ENCODE measurements at regions of chr2 and their contacts with region 1.

Region 1: DNA sequence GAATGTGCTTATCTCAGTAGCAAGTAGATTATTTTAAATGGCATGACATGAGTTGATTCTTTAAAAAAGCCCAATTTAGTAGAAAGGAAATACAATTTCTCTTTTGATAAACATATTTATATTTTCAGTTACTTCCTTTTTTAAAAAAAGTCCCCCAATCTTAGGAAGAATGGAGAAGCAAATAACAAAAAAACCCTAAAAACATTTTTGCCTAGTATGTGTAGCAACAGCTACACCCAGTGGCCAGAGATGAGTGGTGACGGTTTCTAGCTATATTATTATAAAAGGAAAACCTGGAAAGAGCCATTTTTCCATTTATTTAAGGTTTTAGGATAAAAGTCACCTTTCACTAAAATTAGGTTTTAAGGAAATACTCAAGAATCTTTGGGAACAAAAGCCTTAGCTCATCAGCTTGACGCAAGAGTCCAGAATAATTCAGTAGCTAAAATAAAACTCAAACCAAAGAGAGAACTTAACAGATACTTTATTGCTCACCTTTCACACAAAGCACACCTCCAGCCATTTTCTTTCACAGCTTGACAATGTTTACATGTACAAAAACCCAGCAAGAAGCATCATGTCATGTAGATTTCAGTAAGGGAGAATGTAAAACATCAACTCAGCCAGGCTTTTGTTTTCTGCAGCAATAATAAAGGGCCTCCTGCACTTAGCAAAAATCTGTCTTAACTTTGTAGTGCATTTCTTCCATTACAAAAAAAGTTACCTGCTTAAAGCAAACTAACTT is 15.7 kb downstream of the FAM98A start:
- DNase-seq: peak in 3 of 5 donors; percentile 31 to 51 (median 32)
- H3K4me3 ChIP-seq: no peak overlapping the region
- H3K4me3 Mint-ChIP-seq: no peak overlapping the region
- H3K27ac ChIP-seq: no peak overlapping the region
- H3K27ac Mint-ChIP-seq: no peak overlapping the region
- H3K4me1 ChIP-seq: peaks cover 11% of the 10 kb centered on the region
- H3K4me1 Mint-ChIP-seq: peaks cover 2 to 8% (median 5%) of the 10 kb centered on the region in 3 donors
- H3K27me3 ChIP-seq: no peaks in the 10 kb centered on the region
- H3K27me3 Mint-ChIP-seq: no peaks in the 10 kb centered on the region

Region 2: GRCh38 chr2:33086400-33087015 is 496.9 kb before region 1 on chr2:
- CTCF ChIA-PET with region 1: no interaction called
- POLR2A ChIA-PET with region 1: no interaction called
- DNase-seq: no peak
- H3K4me3 ChIP-seq: no peak overlapping the region
- H3K4me3 Mint-ChIP-seq: no peak overlapping the region
- H3K27ac ChIP-seq: no peak overlapping the region
- H3K27ac Mint-ChIP-seq: no peak overlapping the region
- H3K4me1 ChIP-seq: no peaks in the 10 kb centered on the region
- H3K4me1 Mint-ChIP-seq: no peaks in the 10 kb centered on the region
- H3K27me3 ChIP-seq: no peaks in the 10 kb centered on the region
- H3K27me3 Mint-ChIP-seq: peaks cover 11 to 19% of the 10 kb centered on the region in 2 donors

Region 3: DNA sequence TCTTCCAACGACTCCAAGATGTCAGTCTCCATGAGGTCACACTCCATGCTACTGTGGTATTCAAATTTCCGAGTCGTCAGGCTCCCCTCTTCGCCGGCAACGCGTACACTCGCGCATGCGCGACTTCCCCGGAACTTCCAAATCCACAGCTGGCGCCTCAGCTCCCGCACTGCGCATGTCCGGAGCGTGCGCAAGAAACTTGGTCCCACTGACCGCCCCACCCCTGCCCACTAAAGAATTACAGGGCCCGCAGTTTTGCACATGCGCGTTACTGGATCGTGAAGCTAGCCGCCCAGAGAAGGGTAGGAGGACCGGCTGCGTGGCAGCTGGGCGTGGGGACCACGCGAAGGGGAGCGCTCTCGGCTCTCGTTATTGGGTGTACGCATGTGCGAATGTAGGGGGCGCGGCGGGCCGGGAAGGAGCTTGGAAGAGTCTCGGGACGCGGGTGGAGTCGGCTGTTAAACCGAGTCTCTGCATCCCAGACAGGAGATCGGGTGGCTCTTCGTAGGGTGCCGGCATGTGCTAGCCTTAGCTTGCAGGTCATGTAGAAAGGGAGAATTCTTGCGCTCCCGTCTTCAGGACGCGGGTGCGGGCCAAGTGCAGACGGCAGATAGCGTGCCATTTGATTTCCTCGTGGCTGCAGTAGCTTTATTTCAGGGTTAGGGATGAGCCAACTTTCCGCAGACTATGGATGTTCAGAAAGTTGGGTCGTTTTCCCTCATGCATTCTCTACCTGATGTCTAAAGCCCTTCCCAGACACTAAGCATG is 16.0 kb after region 1 on chr2 and contains the start of gene FAM98A:
- CTCF ChIA-PET with region 1: interaction called, 31 read pairs
- POLR2A ChIA-PET with region 1: no interaction called
- DNase-seq: peak; percentile 98 to 99 (median 99)
- H3K4me3 ChIP-seq: peak within 1 kb of the TSS; percentile 87
- H3K4me3 Mint-ChIP-seq: peak within 1 kb of the TSS; percentile 94 to 99 (median 96)
- H3K27ac ChIP-seq: peak within 1 kb of the TSS; percentile 83
- H3K27ac Mint-ChIP-seq: peak within 1 kb of the TSS; percentile 84 to 98 (median 96)
- H3K4me1 ChIP-seq: peaks cover 20% of the 10 kb centered on the region
- H3K4me1 Mint-ChIP-seq: peaks cover 39 to 44% (median 41%) of the 10 kb centered on the region in 3 donors
- H3K27me3 ChIP-seq: no peaks in the 10 kb centered on the region
- H3K27me3 Mint-ChIP-seq: peaks cover 0 to 6% of the 10 kb centered on the region in 2 donors
- total RNA-seq, gene FAM98A: 85.5 to 86.4 TPM

Measured in CD8-positive, alpha-beta memory T cell (primary cell).